ENCODE measurements at regions of chr1 and their contacts with region 1.

Region 1: GRCh38 chr1:26889551-26890466 is at the start of gene GPN2:
- DNase-seq: peak; percentile 18 to 84
- H3K4me3 ChIP-seq: peak within 1 kb of the TSS; percentile 92 to 97
- H3K27ac ChIP-seq: peak within 1 kb of the TSS; percentile 92 to 96
- H3K4me1 ChIP-seq: peaks cover 9 to 20% of the 10 kb centered on the region in 2 donors
- H3K27me3 ChIP-seq: no peaks in the 10 kb centered on the region
- CTCF ChIP-seq: no peak
- total RNA-seq, gene GPN2: 7.5 TPM

Region 2: GRCh38 chr1:26853156-26853555 is 36.7 kb before region 1 on chr1:
- intact Hi-C with region 1: no loop called
- DNase-seq: peak; percentile 60 to 95
- H3K4me3 ChIP-seq: no peak overlapping the region
- H3K27ac ChIP-seq: peak overlapping the region; percentile 18 to 36
- H3K4me1 ChIP-seq: peaks cover 0 to 8% of the 10 kb centered on the region in 2 donors
- H3K27me3 ChIP-seq: no peaks in the 10 kb centered on the region
- CTCF ChIP-seq: peak; percentile 81 to 86 (median 85)

Region 3: GRCh38 chr1:26900001-26900814 is 10.4 kb after region 1 on chr1 and contains the start of gene GPATCH3:
- intact Hi-C with region 1: loop called (anchors 1 kb)
- DNase-seq: peak; percentile 57 to 96
- H3K4me3 ChIP-seq: peak within 1 kb of the TSS; percentile 66 to 95
- H3K27ac ChIP-seq: peak within 1 kb of the TSS; percentile 67 to 87
- H3K4me1 ChIP-seq: peaks cover 6 to 15% of the 10 kb centered on the region in 2 donors
- H3K27me3 ChIP-seq: no peaks in the 10 kb centered on the region
- CTCF ChIP-seq: no peak
- total RNA-seq, gene GPATCH3: 2.0 TPM

Region 4: GRCh38 chr1:26921540-26922430 is 32.0 kb after region 1 on chr1 and contains the start of gene NUDC:
- intact Hi-C with region 1: no loop called
- DNase-seq: peak; percentile 82 to 98
- H3K4me3 ChIP-seq: peak within 1 kb of the TSS; percentile 77 to 85
- H3K27ac ChIP-seq: peak within 1 kb of the TSS; percentile 85 to 93
- H3K4me1 ChIP-seq: peaks cover 7 to 18% of the 10 kb centered on the region in 2 donors
- H3K27me3 ChIP-seq: no peaks in the 10 kb centered on the region
- CTCF ChIP-seq: no peak
- total RNA-seq, gene NUDC: 19.2 TPM

Measured in ascending aorta (tissue), 2 donors.